Right ventricle myocardium inferior (tissue), 1 donor: ENCODE measurements at regions of chr3 and their contacts with region 1.

Region 1: GRCh38 chr3:58008140-58009025 is at the start of gene FLNB:
- DNase-seq: peak; percentile 81
- ATAC-seq: peak; percentile 90
- total RNA-seq, gene FLNB: 32.1 TPM

Region 2: DNA sequence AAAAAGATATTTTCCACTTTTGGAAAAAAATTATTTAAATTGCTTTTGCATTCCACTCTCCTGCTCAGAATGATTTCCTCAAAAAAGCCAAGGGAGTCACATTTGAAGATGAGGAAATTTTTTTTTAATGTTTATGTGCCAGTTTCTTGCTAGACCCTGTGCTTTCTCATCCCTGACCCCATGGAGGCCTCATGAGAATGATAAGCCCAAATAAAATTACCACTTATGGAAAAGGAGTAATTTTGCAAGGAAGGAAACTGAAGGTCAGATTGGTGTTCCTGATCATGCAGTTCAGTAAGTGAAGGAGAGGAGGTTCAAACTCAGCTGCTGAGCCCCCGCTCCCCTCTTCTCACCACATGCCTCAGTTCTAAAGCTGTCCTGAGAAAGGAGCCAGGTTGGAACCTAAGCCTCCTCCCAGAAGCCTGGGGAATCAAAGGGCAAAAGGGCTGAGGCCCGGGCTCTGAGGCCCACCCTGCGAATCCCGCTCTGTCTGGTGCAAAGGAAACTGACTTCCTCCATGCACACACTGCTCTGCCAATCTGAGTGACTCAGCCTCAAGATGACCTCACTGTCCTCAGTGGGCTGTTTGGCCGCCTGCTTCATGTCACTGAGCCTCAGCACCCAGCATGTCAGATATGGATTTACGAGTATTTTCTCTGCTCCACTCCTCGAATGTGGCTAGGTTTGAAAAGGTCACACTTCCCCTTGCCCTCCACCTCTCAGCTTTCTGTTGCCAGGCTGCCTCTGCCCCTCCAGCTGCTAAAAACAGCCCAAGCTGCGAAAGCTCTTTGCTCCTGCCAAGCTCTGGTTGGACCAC is 57.1 kb before region 1 on chr3:
- intact Hi-C with region 1: loop called (anchors 5 kb)
- DNase-seq: peak; percentile 83
- ATAC-seq: peak; percentile 94

Region 3: DNA sequence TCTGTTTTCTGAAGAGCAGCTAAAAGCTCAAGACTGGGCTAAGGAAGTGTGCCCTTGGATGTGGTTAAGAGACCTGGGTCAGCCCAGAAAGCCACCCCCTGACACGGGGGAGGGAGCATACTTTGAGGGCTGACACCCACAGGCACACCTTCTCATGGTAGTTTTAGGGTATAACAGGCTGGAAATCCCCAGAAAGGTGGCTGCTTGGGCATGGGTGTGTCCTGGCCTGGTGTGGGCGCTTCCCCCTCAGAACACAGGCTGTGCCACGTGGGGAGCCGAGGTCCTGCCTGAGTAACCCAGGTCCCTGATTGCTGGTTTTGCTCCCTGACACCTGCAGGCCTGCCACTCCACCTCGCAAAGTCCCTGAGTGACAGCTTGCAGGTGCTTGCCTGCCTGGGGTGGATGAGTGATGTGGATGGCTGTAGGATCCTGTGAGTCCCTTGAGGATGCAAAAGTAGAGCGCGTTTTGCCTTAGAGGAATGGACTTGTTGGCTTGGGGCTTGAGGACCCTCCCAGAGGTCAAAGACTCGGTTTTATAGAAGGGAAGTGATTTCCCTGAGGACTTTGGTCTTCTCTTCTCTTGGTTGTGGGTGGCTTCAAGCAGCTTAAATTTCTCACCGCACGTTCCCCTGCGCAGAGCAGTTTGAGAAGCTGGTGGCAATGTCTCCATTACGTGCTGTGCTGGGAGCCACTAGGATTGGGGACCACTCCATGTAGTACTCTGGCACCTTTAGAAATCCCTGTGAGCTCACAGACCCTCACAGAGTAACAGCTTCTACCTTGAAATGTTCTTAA is 108.0 kb after region 1 on chr3:
- intact Hi-C with region 1: loop called (anchors 5 kb)
- DNase-seq: no peak
- ATAC-seq: no peak

Region 4: GRCh38 chr3:58177747-58178527 is 169.6 kb after region 1 on chr3:
- intact Hi-C with region 1: loop called (anchors 2 kb)
- DNase-seq: peak; percentile 92
- ATAC-seq: peak; percentile 88